Naive thymus-derived CD4-positive, alpha-beta T cell (primary cell): ENCODE measurements at regions of chr9 and their contacts with region 1.

Region 1: DNA sequence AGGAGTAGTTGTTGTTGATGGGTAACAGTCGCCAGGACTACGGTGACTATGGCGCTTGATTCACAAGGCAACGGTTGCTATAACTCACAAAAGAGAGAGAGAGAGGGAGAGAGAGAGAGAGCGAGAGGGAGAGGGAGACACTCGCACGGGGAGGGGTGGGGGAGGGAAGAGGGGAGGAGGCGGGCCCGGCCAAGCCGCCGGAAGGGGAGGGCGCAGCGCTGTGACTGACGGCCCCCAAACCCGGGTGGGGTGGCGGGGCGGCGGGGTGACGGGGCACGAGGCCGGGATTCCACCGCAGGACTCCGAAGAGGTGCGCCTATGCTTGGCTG is at the start of gene RFX3:
- DNase-seq: peak in 8 of 9 donors; percentile 87 to 97 (median 92)
- ATAC-seq: peak; percentile 81
- H3K4me3 ChIP-seq: peak within 1 kb of the TSS; percentile 97
- H3K4me3 Mint-ChIP-seq: peak within 1 kb of the TSS; percentile 90 to 99 (median 94)
- H3K27ac ChIP-seq: peak within 1 kb of the TSS; percentile 100
- H3K27ac Mint-ChIP-seq: peak within 1 kb of the TSS; percentile 95 to 100 (median 99)
- H3K4me1 ChIP-seq: peaks cover 28 to 44% of the 10 kb centered on the region in 2 donors
- H3K4me1 Mint-ChIP-seq: peaks cover 32 to 74% (median 67%) of the 10 kb centered on the region in 7 donors
- H3K27me3 ChIP-seq: no peaks in the 10 kb centered on the region
- H3K27me3 Mint-ChIP-seq: peaks cover 0 to 5% (median 0%) of the 10 kb centered on the region in 5 donors
- total RNA-seq, gene RFX3: 12.8 to 31.7 (median 28.4) TPM

Region 2: DNA sequence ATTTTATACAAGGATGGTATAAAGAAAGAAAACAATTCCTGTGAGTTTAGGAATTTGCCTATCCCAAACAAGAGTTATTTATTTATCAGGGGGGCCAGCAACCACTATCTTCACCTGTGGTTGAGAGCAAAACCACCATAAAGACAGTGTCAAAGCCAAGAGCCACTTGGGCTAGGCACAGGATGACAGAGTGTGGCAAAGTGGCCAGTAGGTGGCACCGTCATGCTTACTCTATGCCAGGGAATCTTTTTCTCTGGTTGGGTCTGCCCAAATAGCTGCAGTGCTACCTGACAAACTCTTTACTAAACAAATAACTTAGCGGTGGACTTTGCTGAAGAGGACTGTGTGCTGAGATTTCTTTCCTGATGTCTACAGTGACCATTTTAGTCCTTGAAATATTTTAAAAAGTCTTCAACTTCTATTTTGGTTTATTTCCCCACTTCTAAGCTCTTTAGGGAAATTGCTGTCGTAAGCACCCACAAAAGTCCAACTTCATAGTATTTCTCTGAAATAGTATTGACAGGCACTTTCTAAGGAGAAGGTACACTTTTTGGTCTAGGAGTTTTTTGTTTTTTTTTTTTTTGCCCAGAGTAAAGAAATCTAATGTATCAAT is 285.0 kb before region 1 on chr9:
- CTCF ChIA-PET with region 1: no interaction called
- POLR2A ChIA-PET with region 1: no interaction called
- intact Hi-C with region 1: loop called in 1 of 2 experiments (anchors 5 kb)
- DNase-seq: peak; percentile 23 to 58 (median 51)
- ATAC-seq: peak; percentile 89
- H3K4me3 ChIP-seq: no peak overlapping the region
- H3K4me3 Mint-ChIP-seq: no peak overlapping the region
- H3K27ac ChIP-seq: no peak overlapping the region
- H3K27ac Mint-ChIP-seq: no peak overlapping the region
- H3K4me1 ChIP-seq: no peaks in the 10 kb centered on the region
- H3K4me1 Mint-ChIP-seq: peaks cover 0 to 9% (median 0%) of the 10 kb centered on the region in 7 donors
- H3K27me3 ChIP-seq: no peaks in the 10 kb centered on the region
- H3K27me3 Mint-ChIP-seq: no peaks in the 10 kb centered on the region

Region 3: GRCh38 chr9:3478549-3478953 is 47.2 kb before region 1 on chr9:
- CTCF ChIA-PET with region 1: interaction called, 3 read pairs
- POLR2A ChIA-PET with region 1: interaction called, 56 read pairs
- intact Hi-C with region 1: loop called (anchors 1 kb)
- DNase-seq: peak in 5 of 9 donors; percentile 9 to 35 (median 20)
- ATAC-seq: peak; percentile 59
- H3K4me3 ChIP-seq: no peak overlapping the region
- H3K4me3 Mint-ChIP-seq: peak overlapping the region; percentile 12 to 92 (median 86)
- H3K27ac ChIP-seq: peak overlapping the region; percentile 5
- H3K27ac Mint-ChIP-seq: peak overlapping the region; percentile 87 to 98 (median 93)
- H3K4me1 ChIP-seq: peaks cover 7 to 22% of the 10 kb centered on the region in 2 donors
- H3K4me1 Mint-ChIP-seq: peaks cover 31 to 64% (median 61%) of the 10 kb centered on the region in 7 donors
- H3K27me3 ChIP-seq: no peaks in the 10 kb centered on the region
- H3K27me3 Mint-ChIP-seq: no peaks in the 10 kb centered on the region

Region 4: DNA sequence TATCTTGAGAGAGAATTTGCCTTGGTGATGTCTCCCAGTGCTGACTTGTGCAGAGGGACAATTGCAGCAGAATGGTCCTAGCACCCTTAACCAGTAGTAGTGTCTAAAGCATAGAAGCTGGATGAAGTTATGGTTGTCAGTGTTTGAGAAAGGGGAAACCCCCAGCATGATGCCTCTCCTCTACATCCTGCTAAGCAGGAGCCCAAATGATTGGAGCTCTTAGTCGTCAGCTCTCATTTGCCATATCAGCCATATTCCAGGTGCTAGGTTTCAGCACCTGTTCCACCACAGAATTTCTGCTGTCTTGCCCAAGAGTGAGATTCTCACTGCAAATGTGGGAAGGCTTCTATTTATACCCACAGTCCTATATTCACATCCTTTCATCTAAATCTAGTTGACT is 43.7 kb after region 1 on chr9:
- CTCF ChIA-PET with region 1: no interaction called
- POLR2A ChIA-PET with region 1: interaction called, 3 read pairs
- intact Hi-C with region 1: loop called in 1 of 2 experiments (anchors 1 kb)
- DNase-seq: no peak
- ATAC-seq: no peak
- H3K4me3 ChIP-seq: no peak overlapping the region
- H3K4me3 Mint-ChIP-seq: no peak overlapping the region
- H3K27ac ChIP-seq: no peak overlapping the region
- H3K27ac Mint-ChIP-seq: peak overlapping the region in 1 of 9 donors; percentile 6
- H3K4me1 ChIP-seq: no peaks in the 10 kb centered on the region
- H3K4me1 Mint-ChIP-seq: peaks cover 0 to 4% (median 0%) of the 10 kb centered on the region in 7 donors
- H3K27me3 ChIP-seq: no peaks in the 10 kb centered on the region
- H3K27me3 Mint-ChIP-seq: no peaks in the 10 kb centered on the region

Region 5: DNA sequence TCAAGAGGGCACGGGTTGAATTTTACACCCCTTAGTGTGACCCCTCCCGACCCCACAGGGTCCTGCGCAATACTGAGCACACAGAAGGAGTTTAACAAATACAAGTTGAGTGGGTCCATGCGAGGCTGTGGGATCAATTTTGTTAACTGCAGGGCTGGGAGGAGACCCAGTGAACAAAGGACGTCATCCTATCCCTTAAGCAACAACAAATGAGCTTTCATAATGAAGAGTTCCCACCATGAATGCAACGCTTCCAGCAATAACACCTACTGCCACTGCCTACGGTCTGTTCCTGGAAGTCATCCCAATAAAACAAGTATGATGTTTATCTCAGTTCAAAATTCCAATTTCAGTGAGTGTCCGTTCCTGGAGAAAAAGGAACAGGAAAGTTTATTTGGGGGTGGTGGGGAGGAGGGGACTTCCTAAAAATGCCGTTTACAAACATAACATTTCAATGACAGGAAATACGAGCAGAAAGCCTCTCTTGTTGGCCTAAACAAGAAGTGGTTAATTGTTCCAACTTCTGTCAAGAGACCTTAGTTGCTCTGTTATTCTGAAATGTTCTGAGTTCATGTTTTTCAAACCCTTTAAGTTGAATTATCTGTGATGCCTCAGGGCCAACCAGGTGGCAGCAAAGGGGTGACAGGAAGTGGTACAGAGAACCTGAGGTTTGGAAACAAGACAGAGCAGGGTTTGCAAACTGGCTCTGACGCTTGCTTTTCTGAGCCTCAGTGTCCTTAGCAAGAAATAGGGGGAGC is 1070.5 kb after region 1 on chr9:
- CTCF ChIA-PET with region 1: no interaction called
- POLR2A ChIA-PET with region 1: interaction called, 3 read pairs
- intact Hi-C with region 1: loop called in 1 of 2 experiments (anchors 2 kb)
- DNase-seq: peak in 7 of 9 donors; percentile 81 to 94 (median 91)
- ATAC-seq: peak; percentile 95
- H3K4me3 ChIP-seq: peak overlapping the region; percentile 13
- H3K4me3 Mint-ChIP-seq: peak overlapping the region; percentile 29 to 80 (median 68)
- H3K27ac ChIP-seq: peak overlapping the region; percentile 74
- H3K27ac Mint-ChIP-seq: peak overlapping the region; percentile 58 to 99 (median 97)
- H3K4me1 ChIP-seq: peaks cover 30 to 53% of the 10 kb centered on the region in 2 donors
- H3K4me1 Mint-ChIP-seq: peaks cover 32 to 76% (median 60%) of the 10 kb centered on the region in 7 donors
- H3K27me3 ChIP-seq: no peaks in the 10 kb centered on the region
- H3K27me3 Mint-ChIP-seq: peaks cover 0 to 5% (median 0%) of the 10 kb centered on the region in 5 donors

Region 6: DNA sequence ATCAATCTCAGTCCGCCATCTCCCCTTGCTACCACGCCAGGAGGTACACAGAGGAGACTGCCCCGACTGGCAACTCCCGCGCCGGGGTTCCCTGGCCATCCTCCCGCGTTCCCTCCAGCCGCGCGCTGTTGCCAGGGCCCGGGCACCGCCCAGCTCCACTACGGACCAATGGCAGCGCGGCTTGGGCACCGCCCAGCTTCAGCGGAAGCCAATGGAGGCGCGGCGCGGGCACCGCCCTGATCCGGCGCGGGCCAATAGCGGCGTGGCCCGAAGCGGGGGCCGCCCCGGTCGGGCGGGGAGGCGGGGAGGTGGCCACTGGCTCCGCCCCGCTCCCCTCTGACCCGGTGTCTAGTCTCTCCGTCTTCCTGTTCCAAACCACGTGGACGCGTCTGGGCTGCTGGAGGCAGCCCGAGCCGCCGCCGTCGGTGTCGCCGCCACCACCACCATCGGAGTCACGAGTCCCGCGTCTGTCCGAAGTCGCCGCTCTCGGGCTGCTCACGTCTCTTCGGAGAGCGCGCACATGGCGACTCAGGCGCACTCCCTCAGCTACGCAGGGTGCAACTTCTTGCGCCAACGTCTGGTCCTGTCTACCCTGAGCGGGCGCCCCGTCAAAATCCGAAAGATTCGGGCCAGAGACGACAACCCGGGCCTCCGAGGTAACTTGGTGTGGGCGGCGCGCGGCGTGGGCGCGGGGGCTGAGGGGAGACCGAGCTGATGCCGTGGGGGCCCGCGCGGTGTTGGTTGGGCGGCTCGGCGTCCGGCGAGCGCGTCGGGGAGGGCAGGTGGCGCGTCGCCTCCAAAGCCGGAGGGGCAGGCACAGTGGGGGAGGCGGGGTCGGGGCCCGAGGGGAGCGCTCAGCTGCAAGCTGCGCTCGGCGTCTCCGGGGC is 1267.0 kb after region 1 on chr9 and contains the start of gene RCL1:
- CTCF ChIA-PET with region 1: no interaction called
- POLR2A ChIA-PET with region 1: interaction called, 12 read pairs
- intact Hi-C with region 1: loop called (anchors 1 to 2 kb)
- DNase-seq: peak; percentile 93 to 98 (median 97)
- ATAC-seq: peak; percentile 96
- H3K4me3 ChIP-seq: peak within 1 kb of the TSS; percentile 99
- H3K4me3 Mint-ChIP-seq: peak within 1 kb of the TSS; percentile 83 to 97 (median 94)
- H3K27ac ChIP-seq: peak within 1 kb of the TSS; percentile 80
- H3K27ac Mint-ChIP-seq: peak within 1 kb of the TSS; percentile 71 to 97 (median 94)
- H3K4me1 ChIP-seq: peaks cover 4 to 18% of the 10 kb centered on the region in 2 donors
- H3K4me1 Mint-ChIP-seq: peaks cover 21 to 56% (median 45%) of the 10 kb centered on the region in 7 donors
- H3K27me3 ChIP-seq: no peaks in the 10 kb centered on the region
- H3K27me3 Mint-ChIP-seq: peaks cover 0 to 11% (median 0%) of the 10 kb centered on the region in 5 donors
- total RNA-seq, gene RCL1: 21.5 to 39.4 (median 23.4) TPM